ENCODE measurements at regions of chr12 and their contacts with region 1.

Region 1: DNA sequence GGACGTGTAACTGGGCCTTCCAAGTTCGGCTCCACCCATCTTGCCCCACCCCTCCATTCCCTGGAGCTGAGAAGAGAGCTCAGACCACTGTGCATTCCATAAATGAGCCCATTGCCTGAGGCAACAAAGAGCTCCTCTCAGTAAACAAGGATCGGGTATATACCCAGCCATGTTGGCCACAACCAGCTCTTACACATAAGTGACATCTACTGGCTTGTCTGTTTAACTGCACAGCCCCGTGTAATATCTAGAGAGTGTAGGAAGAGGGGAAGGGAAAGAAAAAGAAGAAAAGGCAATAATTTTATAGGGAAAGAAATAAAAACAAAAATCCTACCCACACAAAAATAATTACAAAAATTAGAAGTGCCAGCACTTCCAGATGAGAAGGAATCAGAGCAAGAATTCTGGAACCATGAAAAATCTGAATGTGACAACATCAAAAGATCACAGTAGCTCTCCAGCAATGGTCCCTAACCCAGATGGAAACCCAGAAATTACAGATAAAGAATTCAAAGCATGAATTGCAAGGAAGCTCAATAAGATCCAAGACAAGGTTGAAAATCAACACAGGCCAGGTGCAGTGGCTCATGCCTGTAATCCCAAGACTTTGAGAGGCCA is 308.1 kb downstream of the RPAP3 start:
- DNase-seq: no peak
- H3K4me3 ChIP-seq: no peak overlapping the region
- H3K27ac ChIP-seq: no peak overlapping the region
- H3K4me1 ChIP-seq: peaks cover 0 to 7% (median 7%) of the 10 kb centered on the region in 3 donors
- H3K27me3 ChIP-seq: no peaks in the 10 kb centered on the region
- CTCF ChIP-seq: peak; percentile 23 to 72 (median 41)
- POLR2A ChIP-seq: no peak

Region 2: GRCh38 chr12:47032644-47033043 is 365.1 kb before region 1 on chr12:
- intact Hi-C with region 1: loop called (anchors 10 kb)
- DNase-seq: no peak
- H3K4me3 ChIP-seq: no peak overlapping the region
- H3K27ac ChIP-seq: no peak overlapping the region
- H3K4me1 ChIP-seq: peaks cover 0 to 15% (median 0%) of the 10 kb centered on the region in 3 donors
- H3K27me3 ChIP-seq: no peaks in the 10 kb centered on the region
- CTCF ChIP-seq: peak; percentile 16 to 64 (median 46)
- POLR2A ChIP-seq: no peak